ENCODE measurements at regions of chr7 and their contacts with region 1.

Region 1: GRCh38 chr7:74183613-74184450 is 9.7 kb downstream of the EIF4H start:
- DNase-seq: no peak
- H3K4me3 ChIP-seq: no peak overlapping the region
- H3K27ac ChIP-seq: peak overlapping the region in 2 of 3 donors; percentile 1 to 32
- H3K4me1 ChIP-seq: peaks cover 68 to 88% of the 10 kb centered on the region in 2 donors
- H3K27me3 ChIP-seq: no peaks in the 10 kb centered on the region
- CTCF ChIP-seq: peak in 1 of 6 experiments; percentile 16
- POLR2A ChIP-seq: no peak

Region 2: DNA sequence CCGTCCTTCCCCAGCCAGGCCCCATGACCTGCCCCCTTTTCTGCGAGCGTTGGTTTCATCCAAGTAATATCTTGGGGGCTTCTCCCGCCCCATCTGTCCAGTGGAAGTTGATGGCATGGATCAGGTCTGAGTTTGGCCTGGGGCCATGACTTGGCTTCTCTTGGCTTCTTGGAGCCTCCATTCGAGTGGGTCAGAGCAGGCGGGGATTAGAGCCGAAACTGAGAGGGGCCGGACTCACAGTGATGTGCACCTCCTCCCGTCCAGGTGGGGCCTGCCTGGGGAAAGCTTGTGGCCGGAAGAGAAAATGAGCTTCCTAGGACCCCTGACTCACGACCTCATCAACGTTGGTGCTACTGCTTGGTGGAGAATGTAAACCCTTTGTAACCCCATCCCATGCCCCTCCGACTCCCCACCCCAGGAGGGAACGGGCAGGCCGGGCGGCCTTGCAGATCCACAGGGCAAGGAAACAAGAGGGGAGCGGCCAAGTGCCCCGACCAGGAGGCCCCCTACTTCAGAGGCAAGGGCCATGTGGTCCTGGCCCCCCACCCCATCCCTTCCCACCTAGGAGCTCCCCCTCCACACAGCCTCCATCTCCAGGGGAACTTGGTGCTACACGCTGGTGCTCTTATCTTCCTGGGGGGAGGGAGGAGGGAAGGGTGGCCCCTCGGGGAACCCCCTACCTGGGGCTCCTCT is 115.3 kb before region 1 on chr7:
- intact Hi-C with region 1: loop called (anchors 5 kb)
- DNase-seq: no peak
- H3K4me3 ChIP-seq: no peak overlapping the region
- H3K27ac ChIP-seq: no peak overlapping the region
- H3K4me1 ChIP-seq: no peaks in the 10 kb centered on the region
- H3K27me3 ChIP-seq: no peaks in the 10 kb centered on the region
- CTCF ChIP-seq: no peak
- POLR2A ChIP-seq: no peak

Measured in thyroid gland (tissue), 4 donors.